ENCODE measurements at regions of chr17 and their contacts with region 1.

Region 1: GRCh38 chr17:64025732-64026294 is 5.4 kb upstream of the ICAM2 start:
- DNase-seq: peak; percentile 70 to 85
- H3K4me3 ChIP-seq: peak overlapping the region in 1 of 4 experiments; percentile 20; a peak in 1 of 8 replicates
- H3K27ac ChIP-seq: no peak overlapping the region
- H3K4me1 ChIP-seq: no peaks in the 10 kb centered on the region; a peak in 1 of 7 replicates
- H3K27me3 ChIP-seq: peaks cover 0 to 4% (median 1%) of the 10 kb centered on the region in 4 experiments; a peak in 3 of 7 replicates
- CTCF ChIP-seq: peak; percentile 94 to 99 (median 99)
- EP300 ChIP-seq: peak in 1 of 2 experiments; percentile 34; a peak in 1 of 3 replicates
- POLR2A ChIP-seq: no peak
- RAD21 ChIP-seq: peak; percentile 71 to 78

Region 2: DNA sequence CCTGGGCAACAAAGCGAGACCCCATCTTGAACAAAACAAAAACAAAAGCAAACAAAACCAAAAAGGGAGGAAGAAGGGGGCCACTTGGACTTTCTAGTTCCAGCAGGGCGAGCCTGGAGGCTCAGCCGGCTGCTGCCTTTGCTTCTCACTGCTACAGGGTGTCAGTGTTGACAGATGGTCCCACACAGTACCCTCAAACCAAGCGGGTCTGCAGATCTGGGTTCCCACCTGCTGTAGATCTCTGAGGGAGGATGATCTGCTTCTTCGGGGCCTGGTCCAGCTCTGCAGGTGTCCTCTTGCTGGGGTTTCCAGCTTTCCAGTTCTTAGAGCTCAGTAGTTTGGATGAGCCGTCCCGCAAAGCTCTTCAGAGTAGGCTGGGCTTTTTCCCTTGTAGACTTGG is 121.5 kb before region 1 on chr17:
- CTCF ChIA-PET with region 1: interaction called, 46 read pairs
- POLR2A ChIA-PET with region 1: no interaction called
- DNase-seq: no peak
- H3K4me3 ChIP-seq: no peak overlapping the region
- H3K27ac ChIP-seq: no peak overlapping the region
- H3K4me1 ChIP-seq: peaks cover 0 to 4% (median under 1%) of the 10 kb centered on the region in 4 experiments; a peak in 2 of 7 replicates
- H3K27me3 ChIP-seq: no peaks in the 10 kb centered on the region
- CTCF ChIP-seq: no peak
- EP300 ChIP-seq: no peak
- POLR2A ChIP-seq: no peak
- RAD21 ChIP-seq: no peak

Region 3: GRCh38 chr17:63931099-63931561 is 94.7 kb before region 1 on chr17:
- CTCF ChIA-PET with region 1: interaction called, 14 read pairs
- POLR2A ChIA-PET with region 1: no interaction called
- DNase-seq: peak in 1 of 2 experiments; percentile 75
- H3K4me3 ChIP-seq: no peak overlapping the region
- H3K27ac ChIP-seq: no peak overlapping the region
- H3K4me1 ChIP-seq: peaks cover 0 to 16% (median 12%) of the 10 kb centered on the region in 4 experiments; a peak in 6 of 7 replicates
- H3K27me3 ChIP-seq: no peaks in the 10 kb centered on the region
- CTCF ChIP-seq: no peak
- EP300 ChIP-seq: no peak
- POLR2A ChIP-seq: no peak
- RAD21 ChIP-seq: no peak

Region 4: DNA sequence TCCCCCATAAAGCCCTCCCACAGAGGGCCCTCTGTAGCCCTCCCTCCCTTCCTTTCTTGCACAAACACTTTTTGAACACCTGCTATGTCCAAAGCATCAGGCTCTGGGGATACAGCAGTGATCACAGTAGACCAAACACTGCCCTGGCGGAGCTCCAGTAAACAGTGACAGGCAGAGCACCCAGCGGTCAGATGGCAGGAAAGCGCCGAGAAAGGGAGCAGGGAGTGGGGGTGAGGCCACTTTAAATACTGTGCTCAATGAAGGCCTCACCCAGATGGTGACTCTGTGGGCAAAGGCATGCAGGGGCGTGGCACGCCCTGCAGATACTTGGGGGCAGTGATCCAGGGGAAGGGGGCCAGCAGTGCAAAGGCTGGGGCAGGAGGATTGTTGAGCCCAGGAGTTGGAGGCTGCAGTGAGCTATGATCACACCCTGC is 20.1 kb before region 1 on chr17:
- CTCF ChIA-PET with region 1: interaction called, 26 read pairs
- POLR2A ChIA-PET with region 1: no interaction called
- DNase-seq: no peak
- H3K4me3 ChIP-seq: no peak overlapping the region
- H3K27ac ChIP-seq: no peak overlapping the region
- H3K4me1 ChIP-seq: peaks cover 0 to 12% (median 5%) of the 10 kb centered on the region in 4 experiments; a peak in 4 of 7 replicates
- H3K27me3 ChIP-seq: no peaks in the 10 kb centered on the region; a peak in 1 of 7 replicates
- CTCF ChIP-seq: no peak
- EP300 ChIP-seq: no peak
- POLR2A ChIP-seq: no peak
- RAD21 ChIP-seq: no peak

Region 5: GRCh38 chr17:64056269-64057005 is 30.6 kb after region 1 on chr17:
- CTCF ChIA-PET with region 1: interaction called, 78 read pairs
- POLR2A ChIA-PET with region 1: no interaction called
- DNase-seq: peak; percentile 43 to 54
- H3K4me3 ChIP-seq: no peak overlapping the region
- H3K27ac ChIP-seq: no peak overlapping the region
- H3K4me1 ChIP-seq: peaks cover 3 to 9% (median 6%) of the 10 kb centered on the region in 4 experiments
- H3K27me3 ChIP-seq: no peaks in the 10 kb centered on the region
- CTCF ChIP-seq: no peak
- EP300 ChIP-seq: no peak
- POLR2A ChIP-seq: no peak
- RAD21 ChIP-seq: no peak

Region 6: GRCh38 chr17:64291254-64291851 is 265.5 kb after region 1 on chr17:
- CTCF ChIA-PET with region 1: interaction called, 17 read pairs
- POLR2A ChIA-PET with region 1: no interaction called
- DNase-seq: no peak
- H3K4me3 ChIP-seq: no peak overlapping the region
- H3K27ac ChIP-seq: no peak overlapping the region
- H3K4me1 ChIP-seq: no peaks in the 10 kb centered on the region
- H3K27me3 ChIP-seq: no peaks in the 10 kb centered on the region
- CTCF ChIP-seq: peak in 2 of 3 experiments; percentile 47 to 69; a peak in 3 of 4 replicates
- EP300 ChIP-seq: no peak
- POLR2A ChIP-seq: no peak
- RAD21 ChIP-seq: peak; percentile 58 to 65